ENCODE measurements at regions of chr5 and their contacts with region 1.

Region 1: DNA sequence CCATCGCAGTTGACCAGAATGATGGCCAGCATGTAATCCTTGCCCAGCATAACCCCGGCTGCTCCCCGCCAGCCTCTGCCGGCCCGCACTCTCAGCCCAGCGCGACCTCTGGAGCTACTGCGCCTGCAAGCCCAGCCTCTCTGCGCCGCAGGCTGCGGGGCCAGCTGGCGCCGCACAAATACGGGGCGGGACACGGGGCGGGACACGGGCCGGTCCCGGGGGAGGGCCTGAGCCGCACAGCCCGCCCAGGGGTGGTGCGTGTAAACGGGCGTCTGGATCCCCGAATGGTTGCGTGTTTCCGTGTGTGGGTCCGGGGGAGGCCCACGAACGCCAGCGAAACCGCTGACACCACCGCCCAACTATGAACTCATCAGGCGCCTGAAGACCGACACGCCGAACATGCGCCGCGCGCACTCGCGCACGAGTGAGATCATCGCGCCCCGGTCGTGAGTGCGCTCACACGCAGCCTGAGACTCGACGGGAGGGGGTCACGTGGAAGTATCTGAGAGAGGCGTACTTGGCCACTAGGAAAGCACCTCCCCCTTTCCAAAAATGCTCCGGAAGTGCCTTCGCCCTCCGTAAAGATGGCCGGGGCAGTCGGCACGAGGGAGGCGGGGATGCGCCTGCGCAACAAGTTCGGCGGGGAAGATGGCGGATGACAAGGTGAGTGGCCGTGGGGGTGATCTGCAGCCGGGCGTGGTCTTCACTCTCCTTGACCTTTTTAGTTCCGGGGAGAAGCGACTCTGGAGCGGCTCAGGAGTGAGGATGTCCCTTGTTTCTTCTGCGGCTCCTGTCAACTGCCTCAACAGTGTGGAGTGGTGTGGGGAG is at the starts of genes APBB3 and SLC35A4:
- DNase-seq: peak; percentile 96
- ATAC-seq: peak; percentile 90
- H3K4me3 ChIP-seq: peak within 1 kb of the TSS; percentile 89
- H3K27ac ChIP-seq: peak within 1 kb of the TSS; percentile 92
- H3K4me1 ChIP-seq: peaks cover 39% of the 10 kb centered on the region
- H3K27me3 ChIP-seq: no peaks in the 10 kb centered on the region
- CTCF ChIP-seq: no peak
- EP300 ChIP-seq: no peak
- POLR2A ChIP-seq: peak; percentile 97
- RAD21 ChIP-seq: no peak
- polyA plus RNA-seq, gene APBB3: 0.35 to 0.84 TPM
- polyA plus RNA-seq, gene SLC35A4: 27.8 to 31.7 TPM

Region 2: DNA sequence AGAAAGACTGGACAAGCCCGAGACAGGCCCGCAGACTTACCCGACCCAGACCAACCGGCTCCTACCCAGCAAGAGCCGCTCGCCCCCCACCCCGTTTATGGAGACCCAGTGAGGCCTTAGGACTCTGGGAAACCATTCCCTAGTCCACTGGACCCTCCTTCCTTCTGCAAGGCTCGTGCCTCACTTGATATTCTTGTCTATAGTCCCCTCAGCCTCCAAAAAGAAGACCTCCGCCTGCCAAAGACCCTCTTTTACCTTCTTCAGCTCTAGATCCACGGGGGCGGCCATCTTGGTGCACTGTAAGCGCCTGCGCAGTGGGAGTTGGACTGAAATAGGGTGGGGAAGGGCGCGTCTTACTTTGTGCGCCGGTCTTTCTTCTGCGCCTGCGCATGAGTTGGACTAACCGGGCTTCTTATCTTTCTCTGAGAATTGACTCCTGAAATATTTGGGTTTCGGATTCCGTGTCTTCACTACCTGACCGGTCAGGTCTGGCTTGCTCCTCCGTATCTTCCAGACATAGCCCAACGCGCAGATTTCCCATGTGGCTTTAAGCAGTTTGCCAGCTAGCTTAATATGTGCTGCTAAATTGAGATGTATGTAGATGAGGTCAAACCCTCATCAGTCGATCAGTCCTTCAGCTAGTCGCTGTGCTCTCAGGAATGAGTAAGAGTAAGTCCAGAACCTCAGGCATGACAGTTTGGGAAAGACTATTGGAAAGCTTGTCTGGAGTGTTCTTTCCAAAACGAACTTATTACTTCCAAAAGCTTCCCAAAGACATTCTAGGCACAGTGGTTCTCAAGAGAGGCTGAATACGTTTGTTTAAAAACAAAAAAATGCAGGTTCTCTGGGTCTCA is 261.4 kb before region 1 on chr5 and contains the start of gene PFDN1:
- CTCF ChIA-PET with region 1: no interaction called
- POLR2A ChIA-PET with region 1: no interaction called
- RAD21 ChIA-PET with region 1: no interaction called
- SMC1A ChIA-PET with region 1: no interaction called
- in situ Hi-C with region 1: no loop called
- intact Hi-C with region 1: no loop called
- DNase-seq: peak; percentile 76
- ATAC-seq: peak; percentile 97
- H3K4me3 ChIP-seq: peak within 1 kb of the TSS; percentile 90
- H3K27ac ChIP-seq: peak within 1 kb of the TSS; percentile 70
- H3K4me1 ChIP-seq: no peaks in the 10 kb centered on the region
- H3K27me3 ChIP-seq: no peaks in the 10 kb centered on the region
- CTCF ChIP-seq: no peak
- EP300 ChIP-seq: no peak
- POLR2A ChIP-seq: peak; percentile 77
- RAD21 ChIP-seq: no peak
- polyA plus RNA-seq, gene PFDN1: 192 to 193 TPM

Region 3: GRCh38 chr5:140540227-140540626 is 24.2 kb before region 1 on chr5:
- CTCF ChIA-PET with region 1: no interaction called
- POLR2A ChIA-PET with region 1: interaction called, 3 read pairs
- RAD21 ChIA-PET with region 1: interaction called, 4 read pairs
- SMC1A ChIA-PET with region 1: interaction called, 14 read pairs
- in situ Hi-C with region 1: no loop called
- intact Hi-C with region 1: no loop called
- DNase-seq: no peak
- ATAC-seq: no peak
- H3K4me3 ChIP-seq: no peak overlapping the region
- H3K27ac ChIP-seq: no peak overlapping the region
- H3K4me1 ChIP-seq: no peaks in the 10 kb centered on the region; the same call in 1 of the 2 replicates
- H3K27me3 ChIP-seq: no peaks in the 10 kb centered on the region
- CTCF ChIP-seq: no peak
- EP300 ChIP-seq: no peak
- POLR2A ChIP-seq: no peak
- RAD21 ChIP-seq: no peak

Region 4: GRCh38 chr5:140547508-140548299 is 16.7 kb before region 1 on chr5 and contains the start of gene EIF4EBP3:
- CTCF ChIA-PET with region 1: interaction called, 5 read pairs
- POLR2A ChIA-PET with region 1: interaction called, 19 read pairs
- RAD21 ChIA-PET with region 1: interaction called, 7 read pairs
- SMC1A ChIA-PET with region 1: interaction called, 11 read pairs
- in situ Hi-C with region 1: no loop called
- intact Hi-C with region 1: no loop called
- DNase-seq: peak; percentile 47
- ATAC-seq: peak; percentile 99
- H3K4me3 ChIP-seq: peak within 1 kb of the TSS; percentile 66
- H3K27ac ChIP-seq: peak within 1 kb of the TSS; percentile 77
- H3K4me1 ChIP-seq: peaks cover 19% of the 10 kb centered on the region
- H3K27me3 ChIP-seq: no peaks in the 10 kb centered on the region
- CTCF ChIP-seq: peak; percentile 14 to 62 (median 46); a peak in 5 of 6 replicates
- EP300 ChIP-seq: no peak
- POLR2A ChIP-seq: peak; percentile 87
- RAD21 ChIP-seq: peak; percentile 33; the same call in 1 of the 2 replicates
- polyA plus RNA-seq, gene EIF4EBP3: 6.3 to 16.1 TPM

Region 5: GRCh38 chr5:140632150-140633020 is 68.0 kb after region 1 on chr5:
- CTCF ChIA-PET with region 1: interaction called, 10 read pairs
- POLR2A ChIA-PET with region 1: no interaction called
- RAD21 ChIA-PET with region 1: interaction called, 3 read pairs
- SMC1A ChIA-PET with region 1: interaction called, 7 read pairs
- in situ Hi-C with region 1: no loop called
- intact Hi-C with region 1: loop called (anchors 1 kb)
- DNase-seq: no peak
- ATAC-seq: peak; percentile 71
- H3K4me3 ChIP-seq: peak overlapping the region; percentile 58
- H3K27ac ChIP-seq: no peak overlapping the region
- H3K4me1 ChIP-seq: peaks cover 13% of the 10 kb centered on the region
- H3K27me3 ChIP-seq: peaks cover 3 to 4% of the 10 kb centered on the region in 2 experiments; a peak in 2 of 4 replicates
- CTCF ChIP-seq: no peak
- EP300 ChIP-seq: no peak
- POLR2A ChIP-seq: no peak; the same call in 1 of the 2 replicates
- RAD21 ChIP-seq: no peak

Region 6: DNA sequence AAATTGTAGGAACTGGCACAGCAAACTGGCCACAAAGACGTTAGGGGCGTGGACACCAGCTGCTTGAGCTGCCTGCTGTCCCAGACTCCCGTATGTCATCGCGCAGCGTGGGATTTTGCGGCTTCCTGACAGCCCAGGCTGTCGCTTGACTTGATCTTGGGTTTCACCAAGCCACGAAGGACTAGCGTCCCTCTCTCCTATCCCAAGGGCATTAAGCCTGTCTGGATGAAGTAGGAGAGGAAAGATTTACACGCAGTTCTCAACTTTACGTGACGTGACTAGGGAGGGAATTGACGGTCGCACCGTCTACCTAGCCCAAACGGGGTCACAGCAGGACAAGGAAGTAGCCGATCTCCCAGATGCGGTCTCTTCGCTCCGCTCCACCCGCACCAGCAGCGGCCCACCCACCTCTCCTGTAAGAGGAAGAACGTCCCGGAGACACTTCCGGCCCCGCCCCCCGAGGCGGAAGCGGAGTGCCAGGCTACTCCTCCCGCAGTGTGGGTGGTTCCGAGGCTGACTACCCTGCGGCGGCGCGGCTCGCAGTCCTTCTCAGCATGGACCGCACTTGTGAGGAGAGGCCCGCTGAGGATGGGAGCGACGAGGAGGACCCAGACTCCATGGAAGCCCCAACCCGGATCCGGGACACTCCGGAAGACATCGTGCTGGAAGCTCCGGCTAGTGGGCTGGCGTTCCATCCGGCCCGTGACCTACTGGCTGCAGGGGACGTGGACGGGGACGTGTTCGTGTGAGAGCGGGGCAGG is 100.1 kb after region 1 on chr5 and contains the start of gene WDR55:
- CTCF ChIA-PET with region 1: no interaction called
- POLR2A ChIA-PET with region 1: interaction called, 3 read pairs
- RAD21 ChIA-PET with region 1: no interaction called
- SMC1A ChIA-PET with region 1: no interaction called
- in situ Hi-C with region 1: no loop called
- intact Hi-C with region 1: loop called (anchors 1 kb)
- DNase-seq: peak; percentile 71
- ATAC-seq: peak; percentile 98
- H3K4me3 ChIP-seq: peak within 1 kb of the TSS; percentile 96
- H3K27ac ChIP-seq: peak within 1 kb of the TSS; percentile 85
- H3K4me1 ChIP-seq: no peaks in the 10 kb centered on the region
- H3K27me3 ChIP-seq: no peaks in the 10 kb centered on the region
- CTCF ChIP-seq: no peak
- EP300 ChIP-seq: peak in 1 of 2 experiments; percentile 3; a peak in 1 of 4 replicates
- POLR2A ChIP-seq: peak; percentile 98
- RAD21 ChIP-seq: no peak
- polyA plus RNA-seq, gene WDR55: 3.4 to 3.7 TPM

Region 7: GRCh38 chr5:140710899-140711552 is 146.6 kb after region 1 on chr5:
- CTCF ChIA-PET with region 1: no interaction called
- POLR2A ChIA-PET with region 1: no interaction called
- RAD21 ChIA-PET with region 1: no interaction called
- SMC1A ChIA-PET with region 1: interaction called, 3 read pairs
- in situ Hi-C with region 1: no loop called
- intact Hi-C with region 1: loop called (anchors 2 kb)
- DNase-seq: peak; percentile 99
- ATAC-seq: peak; percentile 93
- H3K4me3 ChIP-seq: peak overlapping the region; percentile 66
- H3K27ac ChIP-seq: peak overlapping the region; percentile 67
- H3K4me1 ChIP-seq: no peaks in the 10 kb centered on the region
- H3K27me3 ChIP-seq: no peaks in the 10 kb centered on the region
- CTCF ChIP-seq: no peak
- EP300 ChIP-seq: peak; percentile 78 to 85; a peak in 3 of 4 replicates
- POLR2A ChIP-seq: peak; percentile 72
- RAD21 ChIP-seq: no peak

Measured in GM12878 (cell line).